Right ventricle myocardium inferior (tissue), 1 donor: ENCODE measurements at regions of chr21 and their contacts with region 1.

Region 1: DNA sequence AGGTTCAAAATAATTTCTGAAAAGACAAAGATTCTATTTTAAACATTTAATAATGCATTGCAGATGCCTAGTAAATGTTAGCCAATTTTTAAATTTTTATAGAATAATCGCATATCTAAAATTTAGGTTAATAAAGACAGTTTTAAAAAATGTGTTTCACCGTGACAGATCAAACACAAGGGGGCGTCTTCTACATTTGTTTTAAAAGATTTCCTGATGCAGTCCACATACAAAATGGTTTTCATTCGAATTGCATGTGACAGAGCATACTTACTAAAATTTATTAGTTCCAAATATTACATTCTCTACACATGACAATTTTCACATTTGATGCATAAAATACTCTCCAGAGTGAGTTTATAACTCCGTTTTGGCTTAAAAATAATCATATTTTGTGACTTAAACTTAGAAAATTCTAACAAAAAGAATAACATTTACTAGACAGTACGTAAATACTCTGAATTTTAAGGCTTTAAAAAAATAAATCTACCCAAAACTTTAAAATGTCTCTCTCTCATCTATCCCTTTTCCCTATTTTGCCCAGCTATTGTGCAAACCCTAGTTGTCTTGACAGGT is 75.5 kb downstream of the ADAMTS1 start:
- DNase-seq: no peak
- ATAC-seq: no peak

Region 2: GRCh38 chr21:26572702-26573381 is 196.9 kb before region 1 on chr21 and contains the start of gene CYYR1:
- intact Hi-C with region 1: no loop called
- DNase-seq: peak; percentile 72
- ATAC-seq: peak; percentile 23
- total RNA-seq, gene CYYR1: 27.3 TPM

Region 3: GRCh38 chr21:26810676-26811415 is 41.1 kb after region 1 on chr21:
- intact Hi-C with region 1: loop called (anchors 5 kb)
- DNase-seq: no peak
- ATAC-seq: no peak